GM18951 (cell line): ENCODE measurements at regions of chr14 and their contacts with region 1.

Region 1: DNA sequence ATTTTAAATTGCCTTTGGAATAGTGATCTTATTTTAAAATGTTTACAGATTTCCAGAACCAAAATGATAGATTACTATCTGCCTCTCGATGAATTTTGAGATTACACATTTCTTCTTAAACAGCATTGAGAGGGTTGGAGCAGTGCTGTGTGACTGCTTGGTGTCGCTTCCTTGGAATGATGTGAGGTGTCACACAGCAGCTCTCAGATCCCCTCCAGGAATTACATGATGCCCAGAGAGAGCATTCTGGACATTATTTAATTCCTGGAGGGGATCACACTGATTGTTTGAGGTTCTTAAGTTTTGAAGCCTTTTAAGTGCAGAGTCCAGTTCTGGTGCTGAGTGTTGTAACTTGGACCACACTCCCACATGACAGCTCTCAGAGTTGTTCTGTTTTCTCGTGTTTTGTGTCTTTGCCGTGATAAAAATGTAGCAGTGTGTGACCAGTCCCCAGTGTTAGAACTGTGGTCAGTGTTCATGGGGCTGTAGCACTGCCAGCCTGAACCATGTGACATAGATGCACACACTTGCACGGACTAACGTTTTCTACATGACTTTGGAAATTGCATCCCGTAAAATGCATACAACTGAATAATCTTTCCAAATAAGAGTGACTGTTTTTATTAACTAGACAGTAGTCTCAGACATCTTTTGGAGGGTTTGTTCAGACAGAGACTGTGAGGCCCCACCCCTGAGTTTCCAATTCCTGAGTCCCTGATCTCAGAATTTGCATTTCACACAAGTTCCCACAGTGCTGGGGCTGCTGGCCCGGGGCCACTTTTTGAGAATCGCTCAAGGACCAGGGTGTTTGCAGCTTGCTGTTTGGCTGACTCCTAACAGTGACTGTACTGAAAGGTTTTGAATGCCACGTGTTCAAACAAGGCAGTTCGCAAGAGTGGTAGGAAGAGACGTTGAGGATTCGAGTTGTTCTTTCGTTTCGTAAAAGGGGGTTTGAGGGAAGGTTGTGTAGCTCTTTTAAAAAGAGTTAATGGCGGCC is 26.0 kb downstream of the XRCC3 start:
- POLR2A ChIP-seq: peak; percentile 49

Region 2: GRCh38 chr14:103576371-103577024 is 112.7 kb before region 1 on chr14:
- in situ Hi-C with region 1: loop called (anchors 10 kb)
- POLR2A ChIP-seq: no peak

Region 3: GRCh38 chr14:103801459-103801858 is 112.3 kb after region 1 on chr14:
- in situ Hi-C with region 1: no loop called
- POLR2A ChIP-seq: no peak